Panc1 (cell line): ENCODE measurements at regions of chr22 and their contacts with region 1.

Region 1: GRCh38 chr22:28930357-28931007 is 47.1 kb downstream of the ZNRF3 start:
- DNase-seq: no peak
- ATAC-seq: no peak
- H3K4me3 ChIP-seq: no peak overlapping the region
- H3K27ac ChIP-seq: no peak overlapping the region
- H3K4me1 ChIP-seq: no peaks in the 10 kb centered on the region
- H3K27me3 ChIP-seq: no peaks in the 10 kb centered on the region
- CTCF ChIP-seq: no peak

Region 2: DNA sequence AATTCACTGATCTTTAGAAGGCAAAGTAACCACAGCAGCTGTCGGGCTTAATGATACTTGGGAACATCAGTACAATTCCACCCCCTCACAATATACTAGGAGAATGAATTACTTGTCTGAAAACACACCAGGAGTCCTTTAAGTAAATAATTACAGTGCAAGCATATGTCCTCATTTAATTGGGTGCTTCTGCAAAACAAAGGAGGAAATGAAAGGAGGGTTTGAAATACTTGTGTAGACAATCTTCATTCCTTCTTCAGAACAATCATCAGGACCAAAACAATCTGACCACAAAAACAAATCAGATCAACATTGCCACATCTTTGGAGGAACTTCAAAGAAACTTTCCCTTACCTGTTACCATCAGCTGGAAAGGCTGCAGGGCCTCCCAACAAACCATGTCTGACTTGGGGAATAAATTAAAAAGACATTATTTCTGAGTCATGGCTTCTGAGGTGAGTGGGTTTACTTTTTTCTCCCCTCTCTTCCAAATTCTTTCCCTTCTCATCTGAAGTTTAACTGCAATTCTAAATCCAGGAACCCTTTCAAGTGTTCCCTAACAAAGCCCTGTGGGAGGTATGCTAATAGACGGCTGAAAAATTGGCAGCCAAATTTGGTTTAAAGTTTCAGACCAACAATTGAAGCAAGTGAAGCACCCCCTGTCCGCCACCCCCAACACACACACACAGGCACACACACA is 170.5 kb before region 1 on chr22:
- CTCF ChIA-PET with region 1: no interaction called
- POLR2A ChIA-PET with region 1: no interaction called
- in situ Hi-C with region 1: no loop called
- intact Hi-C with region 1: no loop called
- DNase-seq: no peak
- ATAC-seq: no peak
- H3K4me3 ChIP-seq: no peak overlapping the region
- H3K27ac ChIP-seq: no peak overlapping the region
- H3K4me1 ChIP-seq: no peaks in the 10 kb centered on the region
- H3K27me3 ChIP-seq: no peaks in the 10 kb centered on the region
- CTCF ChIP-seq: no peak

Region 3: DNA sequence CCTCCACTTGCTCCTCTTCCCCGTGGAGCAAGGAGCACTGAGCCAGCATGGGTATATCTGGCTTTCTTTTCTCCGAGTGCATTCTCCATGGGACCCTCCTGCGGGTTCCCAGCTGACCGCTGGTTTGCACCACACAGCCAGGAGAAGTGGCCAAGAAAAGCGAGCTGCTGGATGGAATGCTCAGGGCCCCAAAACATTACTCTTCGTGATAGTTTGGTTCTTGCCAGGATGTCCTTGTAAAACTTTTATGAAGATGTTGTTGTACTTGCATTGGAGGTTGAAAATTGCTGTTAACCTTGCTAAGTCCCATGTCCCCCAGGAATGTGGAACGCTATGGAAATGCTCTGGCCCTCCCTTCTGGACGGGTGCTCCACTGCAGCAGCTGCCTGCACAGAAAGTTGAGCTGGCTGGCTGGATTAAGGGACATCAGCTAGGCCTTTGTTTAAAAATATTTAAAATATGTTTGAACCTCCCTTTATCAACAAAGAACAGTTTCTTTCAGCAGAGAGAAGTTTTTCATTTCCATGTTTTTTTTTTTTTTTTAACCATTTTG is 21.6 kb after region 1 on chr22:
- CTCF ChIA-PET with region 1: no interaction called
- POLR2A ChIA-PET with region 1: no interaction called
- in situ Hi-C with region 1: no loop called
- intact Hi-C with region 1: loop called (anchors 2 kb)
- DNase-seq: no peak
- ATAC-seq: no peak
- H3K4me3 ChIP-seq: no peak overlapping the region
- H3K27ac ChIP-seq: no peak overlapping the region
- H3K4me1 ChIP-seq: no peaks in the 10 kb centered on the region
- H3K27me3 ChIP-seq: no peaks in the 10 kb centered on the region
- CTCF ChIP-seq: no peak; the same call in 1 of the 2 replicates

Region 4: DNA sequence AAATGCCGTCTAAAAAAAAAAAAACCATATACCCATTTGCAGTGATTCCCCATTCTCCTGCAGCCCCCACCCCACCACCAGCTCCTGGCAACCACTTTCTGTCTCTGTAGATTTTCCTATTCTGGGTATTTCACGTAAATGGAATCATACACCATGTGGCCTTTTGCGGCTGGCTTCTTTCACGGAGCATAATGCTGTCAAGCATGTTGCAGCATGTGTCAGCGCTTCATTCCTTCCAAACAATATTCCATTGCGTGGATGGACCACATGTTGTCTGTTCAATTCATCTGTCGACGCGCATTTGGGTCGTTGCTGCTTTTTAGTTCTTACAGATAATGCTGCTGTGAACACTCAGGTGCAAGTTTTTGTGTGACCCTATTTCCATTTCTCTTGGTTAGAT is 260.4 kb after region 1 on chr22:
- CTCF ChIA-PET with region 1: no interaction called
- POLR2A ChIA-PET with region 1: no interaction called
- in situ Hi-C with region 1: no loop called
- intact Hi-C with region 1: no loop called
- DNase-seq: no peak
- ATAC-seq: no peak
- H3K4me3 ChIP-seq: no peak overlapping the region
- H3K27ac ChIP-seq: no peak overlapping the region
- H3K4me1 ChIP-seq: no peaks in the 10 kb centered on the region
- H3K27me3 ChIP-seq: no peaks in the 10 kb centered on the region
- CTCF ChIP-seq: no peak

Region 5: GRCh38 chr22:29315286-29316131 is 385.0 kb after region 1 on chr22 and contains the start of gene RASL10A:
- CTCF ChIA-PET with region 1: no interaction called
- POLR2A ChIA-PET with region 1: no interaction called
- in situ Hi-C with region 1: no loop called
- intact Hi-C with region 1: no loop called
- DNase-seq: no peak
- ATAC-seq: peak; percentile 27; the same call in 1 of the 2 replicates
- H3K4me3 ChIP-seq: peak within 1 kb of the TSS; percentile 36 to 38
- H3K27ac ChIP-seq: no peak within 1 kb of the TSS
- H3K4me1 ChIP-seq: peaks cover 4% of the 10 kb centered on the region; the same call in 1 of the 2 replicates
- H3K27me3 ChIP-seq: no peaks in the 10 kb centered on the region
- CTCF ChIP-seq: no peak
- total RNA-seq, gene RASL10A: 2.6 TPM